Activated B cell treated with CpG ODN at 0.5 μM for 24 hours (primary cell): ENCODE measurements at regions of chr5 and their contacts with region 1.

Region 1: GRCh38 chr5:179732417-179732917 is at the start of gene MAML1:
- DNase-seq: peak; percentile 98
- ATAC-seq: peak; percentile 93
- H3K4me3 Mint-ChIP-seq: peak within 1 kb of the TSS; percentile 93
- H3K27ac Mint-ChIP-seq: peak within 1 kb of the TSS; percentile 91
- H3K4me1 Mint-ChIP-seq: peaks cover 37% of the 10 kb centered on the region
- H3K27me3 Mint-ChIP-seq: no peaks in the 10 kb centered on the region
- CTCF ChIP-seq: no peak
- total RNA-seq, gene MAML1: 33.6 and 38.8 TPM in 2 replicates

Region 2: GRCh38 chr5:178732281-178732680 is 1000.2 kb before region 1 on chr5:
- CTCF ChIA-PET with region 1: no interaction called
- POLR2A ChIA-PET with region 1: no interaction called
- intact Hi-C with region 1: loop called (anchors 1 kb)
- DNase-seq: no peak
- ATAC-seq: no peak
- H3K4me3 Mint-ChIP-seq: no peak overlapping the region
- H3K27ac Mint-ChIP-seq: no peak overlapping the region
- H3K4me1 Mint-ChIP-seq: peaks cover 10% of the 10 kb centered on the region
- H3K27me3 Mint-ChIP-seq: peaks cover 2% of the 10 kb centered on the region
- CTCF ChIP-seq: no peak

Region 3: DNA sequence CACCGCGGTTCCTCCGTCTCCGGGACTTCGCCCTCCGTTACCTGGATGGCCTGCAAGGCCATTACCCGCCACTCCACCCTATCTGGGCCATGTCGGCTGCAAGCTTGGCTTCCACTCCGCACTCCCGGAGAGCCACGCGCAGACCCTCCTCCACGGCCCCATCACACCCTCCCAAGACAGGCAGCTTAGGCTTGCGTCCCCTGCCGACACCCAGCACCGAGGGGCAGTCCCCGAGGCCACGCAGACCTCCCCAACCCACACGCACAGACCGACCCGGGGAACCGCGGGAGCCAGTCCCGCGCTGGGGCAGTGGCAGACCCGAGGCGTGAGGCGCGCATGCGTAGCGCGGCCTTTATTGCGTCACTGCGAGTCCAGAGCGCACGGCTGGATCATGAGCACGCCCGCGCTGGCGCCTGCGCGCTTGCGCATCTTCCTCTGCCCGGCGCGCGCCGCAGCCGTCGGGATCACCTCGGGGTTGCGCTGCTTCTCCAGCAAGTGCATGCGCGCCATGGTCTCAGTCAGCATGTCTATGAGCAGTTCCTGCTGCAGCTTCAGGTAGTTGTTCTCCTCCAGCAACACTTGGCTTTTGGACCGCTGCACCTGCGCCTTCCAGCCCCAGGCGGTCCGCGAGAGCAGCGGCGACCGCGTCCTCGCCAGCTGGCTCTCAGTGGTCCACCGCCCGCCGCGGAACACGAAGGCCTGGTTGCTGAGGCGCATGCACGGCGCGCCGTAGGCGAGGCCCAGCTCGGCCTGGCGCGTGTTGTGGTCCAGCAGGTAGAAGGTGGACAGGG is 54.0 kb before region 1 on chr5:
- CTCF ChIA-PET with region 1: interaction called, 3 read pairs
- POLR2A ChIA-PET with region 1: interaction called, 15 read pairs
- intact Hi-C with region 1: loop called (anchors 1 kb)
- DNase-seq: peak; percentile 91
- ATAC-seq: peak; percentile 91
- H3K4me3 Mint-ChIP-seq: peak overlapping the region; percentile 96
- H3K27ac Mint-ChIP-seq: peak overlapping the region; percentile 94
- H3K4me1 Mint-ChIP-seq: peaks cover 32% of the 10 kb centered on the region
- H3K27me3 Mint-ChIP-seq: no peaks in the 10 kb centered on the region
- CTCF ChIP-seq: no peak

Region 4: DNA sequence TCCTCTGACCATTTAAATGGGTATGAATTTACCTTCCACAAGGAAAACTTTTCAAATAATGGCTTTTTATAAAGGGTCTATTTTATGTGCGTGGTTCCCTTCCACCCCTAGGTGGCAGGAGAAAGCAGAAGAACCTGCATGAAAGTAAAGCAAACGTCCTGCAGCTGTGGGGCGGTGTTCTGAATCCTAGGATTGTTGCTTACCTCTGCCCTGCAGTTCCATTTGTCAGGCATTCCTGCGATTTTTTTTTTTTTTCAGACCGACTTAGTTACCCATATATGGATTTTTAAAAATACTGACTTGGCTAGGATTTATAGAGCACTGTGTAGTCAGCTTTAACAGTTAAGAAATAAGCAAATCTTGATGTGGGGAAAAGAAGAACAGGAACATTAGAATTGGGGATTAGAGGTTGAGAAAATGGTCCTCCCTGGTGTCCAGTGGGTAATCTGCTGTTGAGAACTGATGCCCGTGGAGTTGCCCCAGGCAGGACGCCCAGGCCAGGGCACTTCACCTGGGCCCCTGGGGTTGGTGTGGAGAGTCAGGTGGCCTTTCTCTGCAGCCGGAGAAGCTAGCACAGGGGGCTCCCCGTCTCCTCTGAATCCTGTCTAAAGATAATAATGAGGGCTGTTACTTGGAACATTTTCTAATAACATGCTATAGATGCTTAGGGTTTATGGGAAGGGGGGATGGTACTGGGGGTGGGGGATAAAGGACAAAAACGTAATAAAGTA is 30.9 kb after region 1 on chr5:
- CTCF ChIA-PET with region 1: interaction called, 9 read pairs
- POLR2A ChIA-PET with region 1: interaction called, 9 read pairs
- intact Hi-C with region 1: loop called (anchors 2 kb)
- DNase-seq: no peak
- ATAC-seq: peak; percentile 71
- H3K4me3 Mint-ChIP-seq: no peak overlapping the region
- H3K27ac Mint-ChIP-seq: no peak overlapping the region
- H3K4me1 Mint-ChIP-seq: peaks cover 51% of the 10 kb centered on the region
- H3K27me3 Mint-ChIP-seq: no peaks in the 10 kb centered on the region
- CTCF ChIP-seq: peak; percentile 74

Region 5: GRCh38 chr5:179821581-179822432 is 89.3 kb after region 1 on chr5:
- CTCF ChIA-PET with region 1: no interaction called
- POLR2A ChIA-PET with region 1: interaction called, 12 read pairs
- intact Hi-C with region 1: loop called (anchors 1 kb)
- DNase-seq: peak; percentile 75
- ATAC-seq: peak; percentile 52
- H3K4me3 Mint-ChIP-seq: peak overlapping the region; percentile 96
- H3K27ac Mint-ChIP-seq: peak overlapping the region; percentile 92
- H3K4me1 Mint-ChIP-seq: peaks cover 62% of the 10 kb centered on the region
- H3K27me3 Mint-ChIP-seq: no peaks in the 10 kb centered on the region
- CTCF ChIP-seq: no peak

Region 6: DNA sequence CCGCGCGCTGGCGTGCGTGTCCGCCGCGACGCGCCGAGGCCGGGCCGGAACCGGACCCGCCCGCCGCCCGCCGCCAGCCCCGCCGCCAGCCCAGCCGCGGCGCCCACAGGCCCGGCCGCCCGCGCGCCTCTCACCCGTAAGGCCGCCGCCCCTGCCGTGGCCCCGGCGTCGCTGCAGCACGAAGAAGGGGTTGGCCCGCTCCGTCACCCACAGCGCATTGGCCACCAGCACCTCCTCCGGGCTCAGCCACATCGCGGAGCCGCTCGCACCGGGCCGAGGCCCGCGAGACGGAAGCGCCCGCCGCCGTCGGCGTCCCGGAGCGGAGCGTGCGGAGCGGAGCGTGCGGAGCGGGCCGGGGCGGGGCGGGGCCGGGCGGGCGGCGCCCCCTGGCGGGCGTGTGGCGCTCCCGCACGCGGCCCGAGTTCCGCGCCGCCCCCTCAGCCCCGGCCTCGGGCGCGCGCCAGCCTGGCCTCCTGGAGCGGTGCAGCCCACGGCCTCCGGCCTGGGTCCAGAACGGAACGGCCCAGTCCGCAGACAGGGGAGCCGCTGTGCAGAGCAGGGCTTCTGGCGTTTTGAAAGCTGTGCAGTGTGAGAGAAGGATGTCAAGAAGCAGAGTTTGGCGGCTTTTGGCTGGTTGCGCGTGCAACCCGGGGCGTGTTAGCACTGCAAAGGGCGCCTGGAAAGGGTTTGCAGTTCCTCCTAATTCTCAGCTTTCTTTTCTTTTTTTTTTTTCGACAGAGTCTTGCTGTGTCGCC is 175.3 kb after region 1 on chr5 and contains the start of gene TBC1D9B:
- CTCF ChIA-PET with region 1: no interaction called
- POLR2A ChIA-PET with region 1: no interaction called
- intact Hi-C with region 1: loop called (anchors 1 kb)
- DNase-seq: peak; percentile 74
- ATAC-seq: peak; percentile 90
- H3K4me3 Mint-ChIP-seq: peak within 1 kb of the TSS; percentile 87
- H3K27ac Mint-ChIP-seq: peak within 1 kb of the TSS; percentile 83
- H3K4me1 Mint-ChIP-seq: peaks cover 29% of the 10 kb centered on the region
- H3K27me3 Mint-ChIP-seq: no peaks in the 10 kb centered on the region
- CTCF ChIP-seq: no peak
- total RNA-seq, gene TBC1D9B: 111 and 117 TPM in 2 replicates

Region 7: GRCh38 chr5:180810210-180810958 is 1077.9 kb after region 1 on chr5:
- CTCF ChIA-PET with region 1: no interaction called
- POLR2A ChIA-PET with region 1: no interaction called
- intact Hi-C with region 1: loop called (anchors 10 kb)
- DNase-seq: peak; percentile 98
- ATAC-seq: peak; percentile 84
- H3K4me3 Mint-ChIP-seq: peak overlapping the region; percentile 98
- H3K27ac Mint-ChIP-seq: peak overlapping the region; percentile 100
- H3K4me1 Mint-ChIP-seq: peaks cover 76% of the 10 kb centered on the region
- H3K27me3 Mint-ChIP-seq: no peaks in the 10 kb centered on the region
- CTCF ChIP-seq: no peak